CD8-positive, alpha-beta memory T cell (primary cell): ENCODE measurements at regions of chr12 and their contacts with region 1.

Region 1: GRCh38 chr12:108803428-108804105 is 53.8 kb downstream of the SSH1 start:
- DNase-seq: peak; percentile 50 to 78 (median 65)
- H3K4me3 ChIP-seq: no peak overlapping the region
- H3K4me3 Mint-ChIP-seq: no peak overlapping the region
- H3K27ac ChIP-seq: no peak overlapping the region
- H3K27ac Mint-ChIP-seq: peak overlapping the region in 3 of 8 donors; percentile 33 to 63 (median 50)
- H3K4me1 ChIP-seq: peaks cover 5% of the 10 kb centered on the region
- H3K4me1 Mint-ChIP-seq: peaks cover 4 to 8% (median 5%) of the 10 kb centered on the region in 3 donors
- H3K27me3 ChIP-seq: no peaks in the 10 kb centered on the region
- H3K27me3 Mint-ChIP-seq: no peaks in the 10 kb centered on the region

Region 2: DNA sequence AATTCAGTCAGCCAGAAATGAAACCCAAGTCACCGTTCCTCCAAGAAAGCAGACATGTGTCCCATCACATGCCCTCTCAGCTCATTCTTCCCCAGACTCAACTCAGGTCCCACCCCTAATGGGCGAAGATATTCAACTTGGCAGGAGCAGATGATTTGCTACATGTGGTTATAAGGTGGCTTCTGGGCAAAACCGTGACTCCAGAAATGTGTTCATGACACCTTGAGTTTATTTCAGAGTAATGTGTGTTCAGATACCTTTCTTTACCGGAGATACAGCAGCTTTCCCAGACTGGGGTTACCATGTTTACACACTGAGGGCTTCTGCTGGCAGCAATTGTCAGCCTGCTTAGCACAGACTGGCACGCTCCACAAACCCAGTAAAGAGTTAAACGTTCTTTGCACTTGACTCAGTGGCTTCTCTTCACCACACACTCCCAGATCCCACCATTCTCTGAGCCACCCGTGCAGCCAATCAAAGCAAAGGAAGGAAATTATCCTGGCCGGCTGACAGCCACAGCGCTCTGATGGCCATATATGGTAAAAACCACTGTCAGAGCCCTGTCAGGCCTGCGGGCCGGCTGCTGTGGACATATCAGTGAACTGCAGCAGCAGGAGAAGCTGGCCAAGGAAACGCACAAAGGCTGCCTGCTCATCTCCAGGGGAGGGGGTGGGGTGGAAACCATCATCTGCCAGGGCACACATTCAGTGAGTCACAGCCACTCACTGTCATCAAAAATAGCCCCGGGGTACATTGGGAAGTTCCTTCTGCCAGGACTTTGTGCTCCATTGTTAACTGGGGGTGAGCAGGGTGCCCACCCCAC is 112.2 kb before region 1 on chr12:
- CTCF ChIA-PET with region 1: interaction called, 10 read pairs
- POLR2A ChIA-PET with region 1: no interaction called
- DNase-seq: peak; percentile 27 to 78 (median 28)
- H3K4me3 ChIP-seq: peak overlapping the region; percentile 23
- H3K4me3 Mint-ChIP-seq: peak overlapping the region; percentile 74 to 84 (median 79)
- H3K27ac ChIP-seq: peak overlapping the region; percentile 62
- H3K27ac Mint-ChIP-seq: peak overlapping the region; percentile 58 to 95 (median 82)
- H3K4me1 ChIP-seq: peaks cover 42% of the 10 kb centered on the region
- H3K4me1 Mint-ChIP-seq: peaks cover 42 to 55% (median 48%) of the 10 kb centered on the region in 3 donors
- H3K27me3 ChIP-seq: no peaks in the 10 kb centered on the region
- H3K27me3 Mint-ChIP-seq: no peaks in the 10 kb centered on the region